ENCODE measurements at regions of chr10 and their contacts with region 1.

Region 1: GRCh38 chr10:71212318-71213126 is at the start of gene UNC5B:
- DNase-seq: no peak
- H3K4me3 ChIP-seq: peak within 1 kb of the TSS; percentile 62 to 77
- H3K27ac ChIP-seq: peak within 1 kb of the TSS; percentile 89
- H3K4me1 ChIP-seq: peaks cover 48% of the 10 kb centered on the region
- H3K27me3 ChIP-seq: no peaks in the 10 kb centered on the region
- CTCF ChIP-seq: no peak
- POLR2A ChIP-seq: peak in 1 of 2 donors; percentile 92
- total RNA-seq, gene UNC5B: 24.3 TPM

Region 2: DNA sequence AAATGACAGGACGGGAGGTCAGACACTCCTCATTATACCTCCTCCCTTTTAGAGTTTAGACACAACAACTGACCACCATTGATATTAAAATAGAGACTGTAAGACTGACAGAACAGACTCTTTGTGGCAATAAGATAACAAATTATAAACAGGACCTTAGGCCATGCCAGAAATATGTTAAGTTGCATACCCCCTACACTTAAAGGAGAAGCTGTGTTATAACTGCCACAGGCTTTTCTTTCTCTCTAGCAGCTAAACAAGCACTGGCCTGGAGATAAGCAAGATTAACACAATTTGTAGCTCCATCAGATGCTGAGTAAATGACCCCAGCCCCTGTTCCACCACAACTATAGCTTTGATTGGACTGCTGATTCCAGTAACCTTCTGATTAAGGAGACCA is 10.7 kb before region 1 on chr10:
- intact Hi-C with region 1: no loop called
- DNase-seq: no peak
- H3K4me3 ChIP-seq: no peak overlapping the region
- H3K27ac ChIP-seq: no peak overlapping the region
- H3K4me1 ChIP-seq: no peaks in the 10 kb centered on the region
- H3K27me3 ChIP-seq: no peaks in the 10 kb centered on the region
- CTCF ChIP-seq: no peak
- POLR2A ChIP-seq: no peak

Region 3: GRCh38 chr10:71268247-71268691 is 55.7 kb after region 1 on chr10:
- intact Hi-C with region 1: loop called (anchors 10 kb)
- DNase-seq: no peak
- H3K4me3 ChIP-seq: no peak overlapping the region
- H3K27ac ChIP-seq: peak overlapping the region; percentile 0
- H3K4me1 ChIP-seq: peaks cover 34% of the 10 kb centered on the region
- H3K27me3 ChIP-seq: no peaks in the 10 kb centered on the region
- CTCF ChIP-seq: peak in 1 of 3 experiments; percentile 21
- POLR2A ChIP-seq: no peak

Region 4: GRCh38 chr10:71462062-71462935 is 249.8 kb after region 1 on chr10:
- intact Hi-C with region 1: no loop called
- DNase-seq: no peak
- H3K4me3 ChIP-seq: no peak overlapping the region
- H3K27ac ChIP-seq: no peak overlapping the region
- H3K4me1 ChIP-seq: no peaks in the 10 kb centered on the region
- H3K27me3 ChIP-seq: no peaks in the 10 kb centered on the region
- CTCF ChIP-seq: no peak
- POLR2A ChIP-seq: no peak

Measured in vagina (tissue), 2 donors.